Right ventricle myocardium inferior (tissue), 1 donor: ENCODE measurements at regions of chr4 and their contacts with region 1.

Region 1: DNA sequence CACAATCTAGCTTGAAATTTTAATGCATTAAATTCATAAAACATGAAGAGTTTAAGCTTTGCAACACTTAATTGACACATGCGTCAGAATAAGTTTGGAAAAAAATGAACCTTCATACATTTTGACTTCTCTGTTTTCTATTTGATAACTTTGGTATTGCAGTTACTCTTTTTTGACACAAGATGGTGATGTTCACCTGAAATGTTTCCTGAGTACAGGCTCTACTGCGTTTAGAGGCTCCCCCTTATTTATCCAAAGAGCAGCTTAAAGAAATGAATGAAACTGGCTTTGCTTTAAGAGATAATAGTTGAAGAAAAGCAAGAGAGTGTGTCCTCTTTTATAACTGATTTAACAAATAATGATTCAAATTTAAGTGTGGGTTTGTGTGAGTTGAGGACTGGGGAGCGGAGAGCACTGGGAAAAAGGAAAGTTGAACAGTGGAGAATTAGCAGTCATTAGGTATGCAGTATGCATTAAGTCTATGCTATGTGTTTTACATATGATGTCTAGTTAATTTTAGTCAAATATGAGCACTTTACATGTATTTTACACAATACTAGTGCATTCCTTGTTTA is 180.6 kb upstream of the NUDT6 start:
- DNase-seq: no peak
- ATAC-seq: peak; percentile 57

Region 2: DNA sequence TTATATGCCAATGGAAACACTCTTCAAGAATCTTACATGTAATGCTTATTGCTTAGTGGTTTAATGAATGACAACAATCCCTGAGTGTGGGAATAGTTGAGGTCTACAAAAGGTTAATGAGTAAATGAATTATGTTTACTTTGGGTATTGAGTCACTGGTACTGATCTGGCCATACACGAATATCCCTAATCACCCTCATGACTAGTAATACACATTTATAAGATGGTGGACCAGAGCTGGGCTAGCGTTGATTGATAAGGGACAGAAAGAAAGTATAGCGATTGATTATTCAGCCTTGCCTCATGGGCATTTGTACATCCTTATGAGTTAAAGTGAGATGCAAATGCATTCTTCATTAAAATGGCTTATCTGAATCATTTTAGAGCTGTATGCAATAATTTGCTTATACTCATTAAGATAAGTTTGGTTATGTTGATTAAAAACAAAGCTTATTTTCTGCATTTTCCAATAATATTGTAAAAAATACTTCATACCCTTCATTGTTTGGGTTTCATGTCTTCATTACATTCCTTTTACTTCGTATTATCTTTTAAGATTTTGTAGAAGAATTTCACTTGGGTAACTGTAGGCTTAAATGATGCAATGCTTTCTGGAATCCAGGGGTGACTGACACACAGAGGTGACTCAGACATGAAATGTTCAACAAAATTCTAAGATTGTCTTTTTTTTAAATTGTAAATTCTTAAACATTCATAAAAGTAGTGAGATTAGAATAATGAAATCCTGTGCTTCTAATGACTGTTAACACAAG is 229.0 kb before region 1 on chr4:
- intact Hi-C with region 1: no loop called
- DNase-seq: no peak
- ATAC-seq: no peak

Region 3: DNA sequence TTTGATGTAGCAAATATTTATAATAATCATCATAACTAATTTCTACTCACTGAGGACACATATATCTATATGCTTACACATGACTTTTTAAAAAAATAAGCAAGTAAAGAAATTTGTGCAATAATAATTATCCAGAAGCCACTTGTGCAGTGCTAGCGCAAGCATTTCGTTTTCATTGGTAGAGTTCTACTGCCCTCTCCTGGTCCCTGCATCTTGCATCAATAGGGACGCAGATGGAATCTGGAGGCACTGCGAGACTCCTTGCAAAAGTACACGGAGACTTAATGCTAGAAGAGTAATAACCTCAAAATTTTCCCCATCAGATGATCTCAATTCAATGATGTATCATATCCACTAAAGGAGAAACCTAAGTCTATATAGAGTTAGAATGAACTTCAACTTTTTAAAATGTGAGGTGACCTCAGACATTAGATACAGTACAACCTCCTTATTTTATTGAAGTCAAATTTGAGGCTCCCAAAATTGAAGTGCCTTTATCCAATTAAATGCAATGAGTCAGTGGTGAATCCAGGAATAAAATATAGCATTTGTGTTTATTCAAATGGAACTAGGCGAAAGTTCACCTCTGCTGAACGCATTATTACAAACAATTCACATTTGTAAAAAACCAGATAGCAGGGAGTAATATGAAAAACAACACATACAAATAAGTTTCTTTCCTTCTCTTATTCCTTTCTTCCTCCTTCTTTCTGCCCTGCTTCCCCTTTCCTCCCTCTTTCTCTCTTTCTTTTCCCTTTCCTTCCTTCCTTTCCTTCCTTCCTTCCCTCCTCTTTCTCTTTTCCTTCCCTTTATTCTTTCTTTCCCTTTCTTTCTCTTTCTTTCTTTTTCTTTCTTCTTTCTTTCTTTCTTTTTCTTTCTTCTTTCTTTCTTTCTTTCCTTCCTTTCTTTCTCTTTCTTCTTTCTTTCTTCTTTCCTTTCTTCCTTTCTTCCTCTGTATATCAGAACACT is 1159.5 kb after region 1 on chr4:
- intact Hi-C with region 1: loop called (anchors 2 kb)
- DNase-seq: no peak
- ATAC-seq: peak; percentile 89

Region 4: DNA sequence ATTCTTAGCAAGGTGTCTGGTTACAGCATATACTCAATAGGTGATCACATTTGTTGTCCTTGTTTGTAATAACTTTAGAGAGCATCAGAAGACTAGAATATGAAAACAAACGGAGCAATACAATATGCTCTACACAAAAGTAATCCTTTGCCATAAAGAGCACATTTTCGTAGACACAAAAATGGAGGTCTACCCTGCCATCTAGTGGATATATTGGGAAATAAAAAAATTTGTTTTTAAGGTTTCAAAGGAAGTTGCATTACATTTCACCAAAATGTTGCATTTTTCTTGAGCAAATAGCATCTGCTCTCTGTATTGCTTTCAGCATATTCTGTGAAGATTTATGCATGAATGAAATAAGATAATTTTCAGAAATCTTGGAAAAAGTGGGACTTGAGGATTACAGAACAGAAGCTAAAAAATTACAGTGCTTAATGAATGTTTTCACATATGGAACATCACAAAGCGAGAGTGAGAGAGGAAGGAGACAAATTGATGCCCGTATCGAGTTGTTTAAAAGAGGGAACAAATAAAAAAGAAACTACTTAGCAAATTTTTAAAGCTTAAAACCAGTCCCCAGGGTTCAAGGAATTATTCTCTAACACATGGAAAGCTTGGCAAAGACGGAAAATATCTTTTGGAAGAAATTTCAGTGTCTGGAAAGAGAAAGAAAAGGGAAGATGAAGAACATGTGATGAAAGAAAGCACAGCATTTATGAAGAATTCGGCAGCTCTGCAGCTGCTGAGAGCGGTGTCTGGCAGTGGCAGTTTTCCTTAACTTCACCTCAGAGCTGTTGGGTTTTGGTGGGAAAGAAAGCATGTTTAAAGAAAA is 1219.5 kb after region 1 on chr4:
- intact Hi-C with region 1: loop called (anchors 5 kb)
- DNase-seq: no peak
- ATAC-seq: no peak